Posterior vena cava (tissue), 2 donors: ENCODE measurements at regions of chr1 and their contacts with region 1.

Region 1: DNA sequence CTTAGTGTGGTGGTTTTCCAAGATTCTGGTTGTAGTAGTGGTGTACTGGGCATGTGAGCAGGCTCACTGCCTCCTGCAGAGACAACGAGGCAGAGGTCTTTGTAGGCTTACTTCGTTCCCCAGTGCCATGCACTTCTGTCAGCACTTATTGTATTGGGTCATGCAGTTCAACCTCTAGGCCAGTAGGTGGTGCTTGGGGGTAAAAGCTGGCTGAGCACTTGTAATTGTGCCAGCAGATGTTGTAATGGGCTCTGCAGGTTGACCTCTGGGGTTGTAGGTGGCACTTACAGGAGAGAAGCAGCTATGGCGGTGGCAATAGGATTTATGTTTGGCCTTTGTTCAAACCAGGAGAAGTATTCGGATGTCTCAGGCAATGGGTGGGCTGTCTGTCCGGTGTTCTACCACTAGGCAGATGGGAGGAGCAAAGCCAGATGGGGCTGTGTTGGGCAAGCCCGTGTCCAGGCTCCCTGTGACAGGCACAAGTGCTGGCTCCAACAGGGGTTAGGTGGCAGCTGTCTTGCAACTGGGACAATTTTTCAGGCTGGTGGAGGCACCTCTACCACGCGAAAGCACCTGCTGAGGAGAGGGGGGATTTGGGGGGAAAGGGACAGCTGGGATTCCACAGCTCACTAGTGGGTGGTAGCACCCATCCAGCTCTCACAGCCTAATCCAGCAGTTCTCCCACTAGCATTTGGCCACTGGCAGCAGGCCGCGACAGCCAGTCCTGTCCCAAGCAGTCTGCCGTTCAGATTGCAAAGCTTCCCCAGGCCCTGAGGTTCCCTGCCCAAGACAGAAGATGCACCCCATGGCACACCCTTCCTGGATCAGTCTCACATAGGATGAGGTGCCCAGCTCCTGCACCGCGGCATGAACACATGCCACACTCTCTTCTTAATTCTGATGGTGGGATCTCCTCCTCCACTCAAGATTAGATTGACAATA is 274.5 kb downstream of the CTH start:
- DNase-seq: peak; percentile 74

Region 2: GRCh38 chr1:70641868-70642267 is 43.7 kb before region 1 on chr1:
- intact Hi-C with region 1: loop called in 1 of 2 experiments (anchors 2 kb)
- DNase-seq: no peak

Region 3: GRCh38 chr1:71049951-71050598 is 364.5 kb after region 1 on chr1:
- intact Hi-C with region 1: loop called (anchors 5 to 10 kb)
- DNase-seq: no peak